SK-N-SH (cell line): ENCODE measurements at regions of chr7 and their contacts with region 1.

Region 1: GRCh38 chr7:25179771-25180591 is 48.3 kb downstream of the NPVF start:
- DNase-seq: peak; percentile 100
- H3K4me3 ChIP-seq: peak overlapping the region; percentile 67
- H3K27ac ChIP-seq: peak overlapping the region in 1 of 2 experiments; percentile 67; a peak in 1 of 4 replicates
- H3K4me1 ChIP-seq: peaks cover 0 to 10% of the 10 kb centered on the region in 2 experiments; a peak in 2 of 4 replicates
- H3K27me3 ChIP-seq: no peaks in the 10 kb centered on the region
- CTCF ChIP-seq: peak; percentile 90
- EP300 ChIP-seq: no peak; a peak in 1 of 4 replicates
- RAD21 ChIP-seq: peak; percentile 13; the same call in 1 of the 2 replicates

Region 2: DNA sequence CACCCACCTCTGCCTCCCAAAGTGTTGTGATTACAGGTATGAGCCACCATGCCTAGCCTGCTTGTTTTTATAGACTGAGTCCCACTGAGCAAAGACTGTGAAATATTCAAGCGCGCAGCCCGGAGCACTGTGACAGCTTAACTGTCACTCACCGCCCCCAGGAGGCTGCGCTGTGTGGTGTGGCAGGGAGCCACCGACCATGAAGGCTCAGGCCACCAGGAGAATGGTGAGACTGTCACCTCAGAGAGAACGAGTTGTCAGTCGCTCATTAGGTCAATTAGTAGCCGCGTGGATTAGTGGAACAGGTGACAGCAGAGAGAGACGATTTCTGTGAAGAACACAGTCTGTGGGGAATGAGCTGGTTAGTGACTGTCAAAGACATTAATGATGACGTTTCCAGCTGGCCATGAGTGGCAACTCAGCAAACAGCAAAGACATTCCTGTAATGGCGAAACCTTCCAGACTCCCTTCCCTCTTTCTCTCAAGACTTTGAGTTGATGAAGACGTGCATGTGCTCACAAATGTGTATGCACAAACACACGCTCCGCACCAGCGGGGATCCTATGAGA is 119.4 kb before region 1 on chr7:
- CTCF ChIA-PET with region 1: no interaction called
- POLR2A ChIA-PET with region 1: no interaction called
- DNase-seq: no peak
- H3K4me3 ChIP-seq: no peak overlapping the region
- H3K27ac ChIP-seq: no peak overlapping the region
- H3K4me1 ChIP-seq: peaks cover 0 to 6% of the 10 kb centered on the region in 2 experiments; a peak in 1 of 4 replicates
- H3K27me3 ChIP-seq: no peaks in the 10 kb centered on the region
- CTCF ChIP-seq: no peak
- EP300 ChIP-seq: no peak
- RAD21 ChIP-seq: no peak

Region 3: DNA sequence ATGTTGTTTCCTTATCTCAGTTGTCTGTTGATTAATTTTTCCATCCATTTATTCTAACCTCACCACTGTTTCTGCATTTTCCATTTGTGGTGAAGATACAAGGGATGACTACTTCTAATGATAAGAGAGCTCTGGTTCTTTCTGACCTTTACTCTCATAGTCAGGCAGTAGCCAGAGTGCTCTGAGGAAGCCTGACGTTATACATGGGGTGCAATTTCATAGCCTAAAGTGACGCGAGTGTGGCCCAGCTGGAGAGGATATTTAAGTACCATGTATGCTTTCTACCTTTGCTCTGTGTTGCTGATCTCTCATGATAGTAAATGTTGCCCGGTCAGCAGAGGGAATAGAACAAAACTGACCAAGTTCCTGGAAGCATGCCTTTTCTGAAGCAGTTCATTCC is 21.0 kb before region 1 on chr7:
- CTCF ChIA-PET with region 1: interaction called, 13 read pairs
- POLR2A ChIA-PET with region 1: interaction called, 3 read pairs
- DNase-seq: no peak
- H3K4me3 ChIP-seq: no peak overlapping the region
- H3K27ac ChIP-seq: no peak overlapping the region
- H3K4me1 ChIP-seq: no peaks in the 10 kb centered on the region; a peak in 1 of 4 replicates
- H3K27me3 ChIP-seq: no peaks in the 10 kb centered on the region
- CTCF ChIP-seq: no peak
- EP300 ChIP-seq: no peak
- RAD21 ChIP-seq: no peak

Region 4: DNA sequence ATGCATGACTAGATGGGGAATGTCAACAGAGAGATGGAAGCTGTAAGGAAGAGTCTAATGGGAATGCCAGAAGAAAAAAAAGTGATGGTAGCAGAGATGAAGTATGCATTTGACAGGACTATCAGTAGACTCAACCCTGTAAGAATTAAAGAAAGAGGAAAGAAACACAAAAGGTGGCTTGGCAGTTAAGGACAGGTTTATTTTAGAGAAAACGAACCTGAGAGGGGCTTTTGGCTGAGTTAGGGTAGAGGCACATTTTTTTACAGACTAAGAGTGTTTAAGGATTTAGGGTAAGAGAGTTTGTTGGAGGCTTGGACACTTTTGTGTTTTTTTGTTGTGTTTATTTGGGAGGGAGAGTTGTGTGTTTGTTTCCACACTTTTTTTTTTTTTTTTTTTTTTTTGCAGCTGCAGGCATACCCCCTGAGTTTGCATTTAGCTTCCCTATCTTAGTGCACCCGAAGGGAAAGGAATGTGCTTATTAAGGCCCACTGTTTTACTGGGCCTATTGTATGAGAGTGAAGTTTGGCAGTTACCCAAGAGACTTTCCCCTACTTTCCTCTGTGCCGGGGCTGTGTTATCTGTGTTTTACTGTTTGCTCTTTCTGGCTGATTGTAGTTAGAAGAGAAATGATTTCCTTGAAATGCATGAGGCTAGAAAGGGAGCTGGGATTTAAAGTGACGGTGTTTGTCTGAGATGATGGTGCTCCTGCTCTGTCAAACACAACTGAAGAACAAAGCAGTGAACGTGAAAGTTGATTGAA is 16.3 kb after region 1 on chr7:
- CTCF ChIA-PET with region 1: interaction called, 17 read pairs
- POLR2A ChIA-PET with region 1: no interaction called
- DNase-seq: no peak
- H3K4me3 ChIP-seq: no peak overlapping the region
- H3K27ac ChIP-seq: no peak overlapping the region
- H3K4me1 ChIP-seq: no peaks in the 10 kb centered on the region
- H3K27me3 ChIP-seq: 0 out of 2 replicates have a peak, but pooled peaks cover 11% of the 10 kb centered on the region
- CTCF ChIP-seq: no peak
- EP300 ChIP-seq: no peak
- RAD21 ChIP-seq: no peak